ENCODE measurements at regions of chr10 and their contacts with region 1.

Region 1: DNA sequence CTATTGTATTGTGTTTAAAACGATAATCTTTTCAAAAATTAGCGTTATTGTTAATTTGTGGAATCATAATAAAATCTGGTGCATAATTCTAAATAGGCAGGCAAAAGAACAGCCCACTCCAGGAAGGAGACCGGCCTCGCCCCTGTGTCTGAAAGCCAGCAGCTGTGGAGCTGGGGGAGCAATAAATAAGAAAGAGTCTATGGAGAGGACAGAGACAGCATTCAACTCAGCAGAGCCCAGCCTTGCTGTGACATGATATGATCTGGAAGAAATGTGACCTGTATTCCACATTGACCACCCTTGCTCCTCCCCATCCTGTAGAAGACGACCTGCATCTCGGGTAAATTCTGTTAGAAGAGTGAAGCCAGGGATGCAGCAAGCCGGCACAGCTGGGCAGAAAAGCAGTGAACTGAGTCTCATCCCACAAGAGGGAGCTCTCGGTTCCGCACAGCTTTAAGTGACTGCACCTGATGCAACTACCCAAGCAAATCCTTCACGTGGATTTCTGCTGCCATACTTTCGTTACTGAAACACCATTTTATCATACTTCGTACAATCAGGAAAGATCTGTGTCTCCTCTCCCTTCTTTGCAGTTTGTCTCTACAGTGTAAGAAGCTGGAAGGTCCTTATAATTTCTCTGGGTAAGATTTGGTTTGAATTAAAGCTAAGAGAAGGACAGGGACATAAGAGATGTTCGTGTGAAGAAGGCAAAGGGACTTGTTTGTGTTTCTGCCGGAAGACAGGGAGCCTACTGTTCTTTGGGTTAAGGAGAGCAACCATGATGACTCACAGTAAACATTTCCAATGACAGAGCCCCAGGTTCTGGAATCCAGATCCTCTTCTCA is 427.1 kb downstream of the GPAM start:
- DNase-seq: peak; percentile 68 to 69
- H3K4me3 ChIP-seq: no peak overlapping the region
- H3K4me3 Mint-ChIP-seq: peak overlapping the region; percentile 55
- H3K27ac Mint-ChIP-seq: no peak overlapping the region
- H3K4me1 ChIP-seq: no peaks in the 10 kb centered on the region
- H3K4me1 Mint-ChIP-seq: no peaks in the 10 kb centered on the region
- H3K27me3 ChIP-seq: no peaks in the 10 kb centered on the region
- H3K27me3 Mint-ChIP-seq: peaks cover 7% of the 10 kb centered on the region
- CTCF ChIP-seq: peak; percentile 57 to 78

Region 2: GRCh38 chr10:111856631-111857030 is 100.2 kb after region 1 on chr10:
- CTCF ChIA-PET with region 1: no interaction called
- POLR2A ChIA-PET with region 1: no interaction called
- intact Hi-C with region 1: loop called (anchors 1 kb)
- DNase-seq: peak in 1 of 2 experiments; percentile 12
- H3K4me3 ChIP-seq: no peak overlapping the region
- H3K4me3 Mint-ChIP-seq: no peak overlapping the region
- H3K27ac Mint-ChIP-seq: no peak overlapping the region
- H3K4me1 ChIP-seq: no peaks in the 10 kb centered on the region
- H3K4me1 Mint-ChIP-seq: no peaks in the 10 kb centered on the region
- H3K27me3 ChIP-seq: no peaks in the 10 kb centered on the region; the same call in 1 of the 2 replicates
- H3K27me3 Mint-ChIP-seq: peaks cover 3% of the 10 kb centered on the region
- CTCF ChIP-seq: peak; percentile 41 to 48

Region 3: DNA sequence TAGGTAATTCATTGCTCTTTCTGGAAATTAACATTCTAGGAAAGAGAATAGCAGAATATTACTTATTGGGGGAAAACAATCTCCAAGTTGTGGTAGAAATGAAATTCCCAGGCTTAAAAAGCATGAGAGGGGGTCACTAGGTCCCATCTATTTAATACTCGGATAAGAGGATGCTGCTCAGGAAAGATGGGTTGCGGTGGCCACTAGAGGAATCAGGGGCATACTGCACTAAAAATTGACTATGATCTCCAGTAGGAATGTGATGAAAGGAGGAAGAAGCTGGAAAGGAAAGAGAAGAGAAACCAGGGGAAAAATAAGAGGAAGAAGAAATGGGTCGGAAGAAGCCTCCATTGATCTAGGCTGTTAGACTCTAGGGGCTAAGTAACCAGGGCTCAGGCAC is 234.3 kb after region 1 on chr10:
- CTCF ChIA-PET with region 1: no interaction called
- POLR2A ChIA-PET with region 1: no interaction called
- intact Hi-C with region 1: loop called (anchors 1 kb)
- DNase-seq: peak in 1 of 2 experiments; percentile 7
- H3K4me3 ChIP-seq: no peak overlapping the region
- H3K4me3 Mint-ChIP-seq: no peak overlapping the region
- H3K27ac Mint-ChIP-seq: no peak overlapping the region
- H3K4me1 ChIP-seq: no peaks in the 10 kb centered on the region
- H3K4me1 Mint-ChIP-seq: no peaks in the 10 kb centered on the region
- H3K27me3 ChIP-seq: no peaks in the 10 kb centered on the region
- H3K27me3 Mint-ChIP-seq: peaks cover 23% of the 10 kb centered on the region
- CTCF ChIP-seq: peak in 1 of 2 experiments; percentile 36

Measured in Caco-2 (cell line).